ENCODE measurements at regions of chr2 and their contacts with region 1.

Region 1: DNA sequence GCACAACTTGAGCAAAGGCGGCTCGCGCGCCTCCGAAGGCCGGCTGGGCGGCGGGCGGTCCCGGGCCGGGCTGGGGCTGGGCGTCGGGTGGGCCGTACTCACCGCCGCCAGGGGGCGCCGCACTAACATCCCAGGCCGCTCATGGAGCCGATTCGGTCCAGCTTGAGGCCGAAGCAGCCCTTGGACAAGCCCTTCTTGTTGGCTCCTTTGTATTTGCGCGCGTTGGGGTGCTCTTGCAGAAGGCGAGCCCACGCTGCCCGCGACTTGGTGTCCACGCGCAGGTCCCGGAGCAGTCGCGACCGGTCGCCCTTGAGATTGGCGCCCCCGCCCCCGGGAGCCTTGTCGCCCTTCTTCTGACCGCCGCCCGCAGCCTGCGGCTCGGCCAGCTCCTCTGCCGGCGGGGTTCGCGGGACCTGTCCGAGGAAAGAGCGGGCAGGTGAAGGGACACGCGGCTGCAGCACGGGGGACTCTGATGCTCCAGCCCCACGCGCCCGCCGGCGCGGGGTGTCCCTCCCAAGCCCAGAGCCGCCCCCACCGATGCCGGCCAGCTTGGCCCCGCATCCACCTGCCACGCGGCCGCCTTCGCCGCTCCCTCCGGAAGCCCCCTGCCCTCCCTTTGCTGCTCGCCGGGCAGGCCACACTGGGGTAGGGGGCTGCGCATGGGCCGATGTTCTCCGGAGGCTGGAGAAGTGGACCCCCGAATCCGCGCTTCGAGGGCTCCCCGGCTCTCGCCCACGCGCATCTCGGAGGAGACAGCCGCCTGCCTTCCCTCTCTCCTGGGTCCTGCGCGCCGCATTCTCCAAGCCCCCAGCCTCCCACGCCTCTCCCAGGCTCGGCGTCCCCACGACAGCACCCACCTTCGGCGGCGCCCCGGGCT is 655 bp downstream of the NPPC start:
- DNase-seq: peak; percentile 91
- ATAC-seq: peak; percentile 93

Region 2: DNA sequence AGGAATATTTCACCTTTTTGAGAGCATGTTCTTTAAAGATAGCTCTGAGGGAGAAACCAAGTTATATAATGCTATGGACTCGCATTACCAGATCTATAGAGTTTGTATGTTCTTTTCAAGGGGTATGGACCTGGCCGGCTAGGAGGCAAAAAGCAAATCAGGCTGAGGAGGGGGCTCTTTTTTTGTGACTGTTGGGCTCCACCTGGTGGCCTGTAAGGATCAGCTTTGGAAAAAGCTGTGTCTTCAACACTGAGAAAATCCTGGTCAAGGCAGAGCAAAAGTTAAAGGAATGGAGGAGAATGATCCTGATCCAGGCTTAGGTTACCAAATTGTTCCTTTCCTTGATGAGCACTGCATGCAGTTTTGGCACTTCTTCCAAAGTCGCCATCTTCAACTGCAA is 216.5 kb after region 1 on chr2:
- intact Hi-C with region 1: loop called (anchors 5 kb)
- DNase-seq: no peak
- ATAC-seq: peak; percentile 62

Region 3: DNA sequence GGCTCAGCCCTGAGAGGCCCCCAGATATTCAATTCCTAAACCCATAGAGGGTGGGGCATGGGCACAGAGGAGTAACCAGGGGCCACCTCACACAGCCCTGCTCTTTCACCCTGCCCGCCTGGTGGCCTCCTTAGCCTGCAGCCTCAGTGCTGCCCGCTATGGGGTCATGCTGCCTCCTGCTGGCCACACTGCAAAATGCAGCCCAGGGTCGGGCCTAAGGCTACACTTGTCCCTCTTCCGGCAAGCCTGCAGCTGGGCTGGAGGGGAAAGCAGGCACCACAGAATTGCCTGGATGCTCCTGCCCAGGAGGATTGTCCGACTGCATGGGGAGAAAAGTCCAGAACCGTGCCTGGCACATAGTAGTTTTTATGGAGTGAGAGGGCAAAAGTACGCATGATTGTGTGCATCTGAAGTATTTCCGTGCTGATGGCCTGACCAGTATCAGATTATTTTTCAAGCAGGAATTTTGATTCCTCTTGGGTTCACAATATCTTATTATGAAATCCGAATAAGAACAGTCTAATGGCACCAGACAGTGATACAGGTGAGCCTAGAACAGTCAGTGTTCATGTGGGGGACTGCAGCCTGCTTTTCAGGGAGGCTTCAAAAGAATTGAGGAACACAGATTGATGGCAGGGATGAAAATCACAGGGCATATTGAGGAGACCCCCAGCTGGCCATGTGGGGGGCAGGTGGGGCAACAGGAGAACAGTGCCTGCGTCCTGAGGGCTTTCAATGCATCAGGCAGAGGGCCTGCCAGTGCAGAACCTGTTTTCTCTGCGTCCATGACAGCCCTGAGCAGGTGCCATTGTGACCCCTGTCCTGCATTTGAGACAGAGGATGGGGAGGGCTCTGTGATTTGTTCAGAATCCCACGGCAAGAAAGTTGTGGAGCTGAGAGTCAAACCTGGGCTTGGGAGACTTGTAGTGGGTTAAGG is 401.8 kb after region 1 on chr2:
- intact Hi-C with region 1: loop called (anchors 2 kb)
- DNase-seq: peak; percentile 85
- ATAC-seq: peak; percentile 75

Region 4: GRCh38 chr2:232795920-232796319 is 870.4 kb after region 1 on chr2:
- intact Hi-C with region 1: no loop called
- DNase-seq: no peak
- ATAC-seq: no peak

Measured in sciatic nerve (tissue), 2 donors.